ENCODE measurements at regions of chr18 and their contacts with region 1.

Region 1: DNA sequence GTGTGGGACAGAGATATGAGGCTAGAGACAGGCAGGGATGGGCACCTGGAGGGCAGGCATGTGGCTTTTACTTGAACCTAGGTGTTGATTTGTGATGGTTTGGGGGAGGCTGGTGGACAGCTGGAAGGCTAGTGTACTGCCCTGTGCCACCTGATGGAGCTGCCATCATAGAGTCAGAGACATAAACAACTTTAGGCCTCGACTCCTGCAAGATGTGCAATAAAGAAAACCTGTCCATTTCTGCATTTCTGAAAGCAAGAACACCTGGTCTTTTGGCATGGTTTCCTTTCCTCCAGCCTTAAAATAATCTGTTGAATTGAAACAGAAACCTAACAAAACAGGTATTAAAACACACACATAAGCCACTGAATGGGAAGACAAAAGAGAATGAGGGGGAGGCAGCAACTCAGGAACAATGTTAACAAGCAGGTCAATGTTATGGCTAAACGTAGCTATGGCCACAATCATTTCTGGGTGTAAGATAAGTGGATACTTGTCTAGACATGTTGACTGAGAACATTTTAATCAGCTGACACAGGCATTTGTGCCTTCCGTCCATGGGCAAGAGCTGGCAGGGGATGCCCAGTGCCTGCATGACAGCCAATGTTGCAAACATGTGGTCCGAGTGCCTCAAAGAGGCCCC is 87.8 kb downstream of the KCTD1 start:
- DNase-seq: peak; percentile 56 to 60
- H3K4me3 ChIP-seq: no peak overlapping the region
- H3K4me1 ChIP-seq: peaks cover 36% of the 10 kb centered on the region
- H3K27me3 ChIP-seq: no peaks in the 10 kb centered on the region

Region 2: GRCh38 chr18:26532367-26533340 is 72.1 kb after region 1 on chr18:
- in situ Hi-C with region 1: loop called (anchors 5 kb)
- DNase-seq: no peak
- H3K4me3 ChIP-seq: no peak overlapping the region
- H3K4me1 ChIP-seq: peaks cover 13% of the 10 kb centered on the region
- H3K27me3 ChIP-seq: no peaks in the 10 kb centered on the region

Region 3: GRCh38 chr18:26556573-26556972 is 96.0 kb after region 1 on chr18:
- in situ Hi-C with region 1: no loop called
- DNase-seq: no peak
- H3K4me3 ChIP-seq: no peak overlapping the region
- H3K4me1 ChIP-seq: peaks cover 4% of the 10 kb centered on the region
- H3K27me3 ChIP-seq: no peaks in the 10 kb centered on the region